ENCODE measurements at regions of chr2 and their contacts with region 1.

Region 1: DNA sequence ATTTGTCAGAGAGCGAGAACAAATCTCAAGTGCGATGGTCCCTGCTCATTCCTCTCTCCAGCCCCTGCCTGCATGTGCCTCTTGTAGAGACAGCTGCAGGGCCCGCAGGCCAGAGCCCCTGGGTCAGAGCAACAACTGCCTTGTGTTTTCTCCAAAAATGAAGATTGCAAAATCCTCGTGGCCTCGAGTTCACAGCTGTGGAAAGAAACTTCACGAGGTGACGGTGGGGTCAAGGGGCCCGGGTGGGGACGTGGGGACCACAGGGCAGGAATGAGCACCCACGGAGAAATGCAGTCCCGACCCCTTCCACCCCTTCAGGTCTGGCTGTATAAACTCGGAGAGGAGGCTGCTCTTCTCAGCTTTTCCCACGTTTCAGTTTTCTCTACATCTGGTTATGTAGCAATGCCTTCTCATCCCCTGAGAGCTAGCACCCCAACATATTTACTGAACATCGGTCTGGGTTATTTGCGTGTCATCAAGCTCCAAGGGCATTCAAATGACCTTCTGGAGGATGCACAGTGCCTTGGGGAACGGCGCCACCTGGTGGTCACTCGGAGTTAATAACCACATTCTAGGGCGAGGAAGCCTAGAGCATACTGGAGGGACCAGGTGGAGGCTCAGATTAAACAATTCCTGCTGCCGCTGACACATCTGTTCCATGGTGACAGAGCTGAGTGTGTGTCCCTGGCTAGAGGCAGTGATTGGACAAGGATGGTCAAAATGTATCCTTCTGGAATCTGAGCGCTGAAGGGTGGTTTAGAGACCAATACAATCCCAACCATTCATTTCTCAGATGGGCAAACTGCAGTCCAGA is 91.4 kb upstream of the CYRIA start:
- DNase-seq: peak; percentile 80 to 93
- ATAC-seq: peak; percentile 94
- H3K4me3 ChIP-seq: no peak overlapping the region
- H3K27ac ChIP-seq: no peak overlapping the region
- H3K4me1 ChIP-seq: no peaks in the 10 kb centered on the region
- H3K27me3 ChIP-seq: no peaks in the 10 kb centered on the region

Region 2: DNA sequence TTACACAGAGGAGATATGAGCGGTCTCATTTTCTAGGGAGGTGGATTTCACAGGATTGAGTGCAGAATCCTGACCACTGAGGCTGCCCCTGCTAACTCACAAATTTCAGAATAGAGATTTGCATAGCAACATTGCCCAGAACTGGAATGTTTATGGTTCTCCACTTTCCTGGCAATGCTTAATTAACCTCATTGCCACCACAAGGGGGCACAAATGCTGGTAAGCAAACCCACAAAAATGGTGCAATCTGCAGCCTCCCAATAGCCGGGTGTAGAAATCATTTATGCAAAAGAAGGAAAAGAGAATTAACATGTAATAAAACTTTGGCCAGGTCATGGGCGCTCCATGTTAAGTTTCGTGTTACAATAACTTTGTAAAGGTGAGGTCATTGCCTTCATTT is 203.8 kb before region 1 on chr2:
- intact Hi-C with region 1: loop called in 1 of 2 experiments (anchors 5 kb)
- DNase-seq: no peak
- ATAC-seq: no peak
- H3K4me3 ChIP-seq: no peak overlapping the region
- H3K27ac ChIP-seq: no peak overlapping the region
- H3K4me1 ChIP-seq: no peaks in the 10 kb centered on the region
- H3K27me3 ChIP-seq: no peaks in the 10 kb centered on the region